PC-9 (cell line): ENCODE measurements at regions of chr2 and their contacts with region 1.

Region 1: DNA sequence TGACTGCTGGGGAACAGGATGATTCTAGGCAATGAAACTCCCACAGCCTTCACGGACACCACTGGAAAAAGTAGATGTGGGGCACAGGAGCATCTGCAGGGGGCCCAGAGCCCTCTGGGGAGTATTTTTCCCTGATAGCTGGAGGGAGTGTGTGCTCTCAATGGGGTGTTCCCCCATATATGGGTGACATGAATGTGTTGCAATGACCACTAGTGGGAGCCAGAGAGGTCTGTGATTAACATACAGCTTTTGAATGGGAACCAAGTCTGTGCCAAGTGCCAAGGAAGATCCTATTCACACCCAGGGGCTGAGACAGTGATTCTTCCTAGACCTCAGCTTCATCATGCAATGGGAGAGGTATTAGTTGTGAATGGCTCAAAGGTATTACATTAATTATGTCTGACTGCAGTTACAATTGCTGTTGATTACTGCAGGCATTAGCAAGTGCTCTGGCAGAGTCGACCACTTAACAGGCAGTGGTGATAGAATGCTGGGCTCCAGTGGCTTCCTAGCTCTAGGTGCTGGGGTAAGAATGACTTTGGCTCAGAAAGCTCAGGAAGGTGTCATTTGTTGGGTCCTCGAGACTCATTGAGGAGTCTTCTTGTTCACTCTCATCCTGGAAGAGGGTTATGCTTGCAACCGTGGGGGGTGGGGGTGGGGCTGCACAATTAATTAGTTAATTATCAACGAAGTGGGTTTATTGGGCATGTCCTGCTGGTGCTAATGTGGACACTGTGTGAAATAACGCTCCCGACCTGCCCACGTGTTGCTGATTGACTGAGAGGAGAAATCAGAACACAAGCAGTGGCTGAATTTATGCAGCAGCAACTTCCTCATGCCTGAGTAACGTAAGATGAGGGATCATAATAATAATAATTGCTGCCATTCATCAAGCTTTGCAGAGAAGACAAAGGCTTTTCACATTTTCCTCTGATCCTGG is 194.1 kb downstream of the CLIP4 start:
- DNase-seq: peak; percentile 20 to 36
- H3K4me3 ChIP-seq: no peak overlapping the region
- H3K27ac ChIP-seq: no peak overlapping the region
- H3K4me1 ChIP-seq: no peaks in the 10 kb centered on the region
- H3K27me3 ChIP-seq: peaks cover 71% of the 10 kb centered on the region
- CTCF ChIP-seq: peak; percentile 83

Region 2: GRCh38 chr2:29115797-29116781 is 193.3 kb before region 1 on chr2:
- CTCF ChIA-PET with region 1: no interaction called
- POLR2A ChIA-PET with region 1: no interaction called
- intact Hi-C with region 1: no loop called
- DNase-seq: peak; percentile 58 to 71
- H3K4me3 ChIP-seq: peak overlapping the region; percentile 90
- H3K27ac ChIP-seq: peak overlapping the region; percentile 97
- H3K4me1 ChIP-seq: peaks cover 70% of the 10 kb centered on the region
- H3K27me3 ChIP-seq: no peaks in the 10 kb centered on the region
- CTCF ChIP-seq: no peak

Region 3: GRCh38 chr2:29165362-29166236 is 143.8 kb before region 1 on chr2:
- CTCF ChIA-PET with region 1: no interaction called
- POLR2A ChIA-PET with region 1: no interaction called
- intact Hi-C with region 1: no loop called
- DNase-seq: peak in 1 of 2 experiments; percentile 73
- H3K4me3 ChIP-seq: no peak overlapping the region
- H3K27ac ChIP-seq: peak overlapping the region; percentile 39
- H3K4me1 ChIP-seq: peaks cover 20% of the 10 kb centered on the region
- H3K27me3 ChIP-seq: no peaks in the 10 kb centered on the region
- CTCF ChIP-seq: no peak

Region 4: GRCh38 chr2:29227935-29228627 is 81.3 kb before region 1 on chr2:
- CTCF ChIA-PET with region 1: interaction called, 12 read pairs
- POLR2A ChIA-PET with region 1: no interaction called
- intact Hi-C with region 1: no loop called
- DNase-seq: no peak
- H3K4me3 ChIP-seq: no peak overlapping the region
- H3K27ac ChIP-seq: no peak overlapping the region
- H3K4me1 ChIP-seq: peaks cover 18% of the 10 kb centered on the region
- H3K27me3 ChIP-seq: peaks cover 40% of the 10 kb centered on the region
- CTCF ChIP-seq: no peak